HCT116 (cell line): ENCODE measurements at regions of chr11 and their contacts with region 1.

Region 1: DNA sequence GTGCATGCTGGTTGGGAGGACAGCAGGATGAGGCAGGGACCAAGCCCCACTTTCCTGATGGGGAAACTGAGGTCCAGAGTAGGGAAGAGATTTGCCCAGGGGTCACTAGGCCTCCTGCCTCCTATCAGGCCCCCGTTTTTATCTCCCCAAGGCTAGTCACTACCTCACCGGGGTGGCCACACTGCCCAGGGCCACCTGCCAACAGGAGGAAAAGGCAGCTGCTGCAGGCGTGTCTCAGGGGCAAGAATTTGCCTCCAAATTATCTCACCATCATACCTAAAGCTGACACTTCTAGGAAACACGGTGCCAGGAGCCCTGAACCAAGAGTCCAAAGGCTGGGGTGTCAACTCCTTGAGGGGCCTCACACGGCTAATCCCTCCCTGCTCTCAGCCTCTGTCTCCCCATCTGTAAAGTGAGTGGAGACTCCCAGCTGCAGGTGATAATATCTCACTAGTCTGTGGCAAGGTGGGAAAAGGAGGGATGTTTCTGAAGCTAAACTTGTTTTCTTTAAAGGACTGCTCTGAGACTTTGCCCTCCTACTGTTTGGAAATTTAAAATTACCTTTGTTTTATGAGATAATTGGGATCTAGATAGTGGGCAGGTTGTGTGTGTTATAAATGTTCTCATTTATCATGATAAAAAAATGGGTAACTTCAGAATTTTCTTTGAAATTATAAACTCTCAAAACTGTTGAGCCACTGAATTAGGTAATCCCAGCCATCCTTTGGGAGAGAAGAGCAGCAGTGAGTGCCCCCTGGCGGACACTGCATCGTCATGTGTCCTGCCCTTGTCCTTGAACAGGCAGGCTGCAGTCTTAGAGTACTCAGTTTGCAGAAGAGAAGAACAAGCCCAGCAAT is 60.0 kb downstream of the MYO7A start:
- DNase-seq: peak; percentile 54
- ATAC-seq: peak; percentile 54
- H3K4me3 ChIP-seq: no peak overlapping the region
- H3K27ac ChIP-seq: no peak overlapping the region
- H3K4me1 ChIP-seq: peaks cover 0 to 14% of the 10 kb centered on the region in 2 experiments; a peak in 3 of 4 replicates
- H3K27me3 ChIP-seq: no peaks in the 10 kb centered on the region
- CTCF ChIP-seq: peak; percentile 95 to 98 (median 96)
- POLR2A ChIP-seq: no peak
- RAD21 ChIP-seq: peak; percentile 88

Region 2: GRCh38 chr11:76152086-76152681 is 1035.8 kb before region 1 on chr11:
- CTCF ChIA-PET with region 1: no interaction called
- POLR2A ChIA-PET with region 1: no interaction called
- RAD21 ChIA-PET with region 1: no interaction called
- intact Hi-C with region 1: no loop called
- DNase-seq: peak; percentile 57
- ATAC-seq: peak; percentile 96
- H3K4me3 ChIP-seq: no peak overlapping the region
- H3K27ac ChIP-seq: no peak overlapping the region
- H3K4me1 ChIP-seq: peaks cover 0 to 8% of the 10 kb centered on the region in 2 experiments; a peak in 2 of 4 replicates
- H3K27me3 ChIP-seq: no peaks in the 10 kb centered on the region
- CTCF ChIP-seq: peak; percentile 88 to 94 (median 93)
- POLR2A ChIP-seq: no peak
- RAD21 ChIP-seq: peak; percentile 98

Region 3: DNA sequence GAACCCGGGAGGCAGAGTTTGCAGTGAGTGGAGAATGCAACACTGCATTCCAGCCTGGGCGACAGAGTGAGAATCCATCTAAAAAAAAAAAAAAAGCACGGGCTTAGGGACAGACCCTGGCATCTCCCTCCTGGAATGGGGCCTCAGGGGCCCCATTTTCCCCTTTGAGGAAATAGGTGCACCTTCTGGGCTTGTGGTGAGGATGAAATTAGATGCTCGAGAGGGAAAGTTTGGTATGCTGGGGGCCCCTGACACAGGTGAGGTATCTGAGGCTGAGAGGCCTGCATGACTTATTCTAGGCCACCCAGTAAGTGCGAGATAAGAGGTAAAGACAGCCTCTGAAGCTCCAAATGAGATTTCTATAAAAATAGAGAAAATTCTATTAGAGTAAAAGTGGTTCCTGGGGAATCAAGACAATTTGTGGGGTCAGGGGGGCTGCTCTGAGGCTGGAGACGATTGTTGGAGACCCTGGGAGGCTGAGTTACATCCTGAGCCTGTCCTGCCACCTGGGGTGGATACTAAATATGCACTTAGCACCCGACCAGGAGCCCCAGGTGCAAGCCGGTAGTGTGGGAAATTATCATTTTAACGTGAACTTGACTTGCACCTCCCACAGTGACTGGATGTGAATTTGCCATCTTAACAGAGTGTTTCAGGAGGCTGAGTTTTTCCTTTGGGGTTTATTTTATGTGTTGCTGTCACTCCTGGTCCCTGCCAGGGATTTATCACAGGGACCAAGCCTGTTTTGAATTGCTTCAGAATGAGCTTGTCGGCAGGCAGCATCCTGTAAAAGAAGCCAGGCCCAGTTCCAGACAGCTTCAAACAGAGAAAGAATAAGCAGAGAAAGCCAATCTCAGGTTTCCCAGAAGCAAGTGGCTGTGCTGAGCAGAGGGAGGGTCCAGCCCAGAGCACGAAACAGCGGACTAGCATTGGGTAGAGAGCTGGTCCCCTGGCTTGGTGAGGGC is 453.3 kb before region 1 on chr11:
- CTCF ChIA-PET with region 1: no interaction called
- POLR2A ChIA-PET with region 1: no interaction called
- RAD21 ChIA-PET with region 1: no interaction called
- intact Hi-C with region 1: loop called (anchors 5 kb)
- DNase-seq: no peak
- ATAC-seq: no peak
- H3K4me3 ChIP-seq: no peak overlapping the region
- H3K27ac ChIP-seq: no peak overlapping the region
- H3K4me1 ChIP-seq: no peaks in the 10 kb centered on the region
- H3K27me3 ChIP-seq: no peaks in the 10 kb centered on the region; the same call in 1 of the 2 replicates
- CTCF ChIP-seq: no peak
- POLR2A ChIP-seq: no peak
- RAD21 ChIP-seq: no peak

Region 4: DNA sequence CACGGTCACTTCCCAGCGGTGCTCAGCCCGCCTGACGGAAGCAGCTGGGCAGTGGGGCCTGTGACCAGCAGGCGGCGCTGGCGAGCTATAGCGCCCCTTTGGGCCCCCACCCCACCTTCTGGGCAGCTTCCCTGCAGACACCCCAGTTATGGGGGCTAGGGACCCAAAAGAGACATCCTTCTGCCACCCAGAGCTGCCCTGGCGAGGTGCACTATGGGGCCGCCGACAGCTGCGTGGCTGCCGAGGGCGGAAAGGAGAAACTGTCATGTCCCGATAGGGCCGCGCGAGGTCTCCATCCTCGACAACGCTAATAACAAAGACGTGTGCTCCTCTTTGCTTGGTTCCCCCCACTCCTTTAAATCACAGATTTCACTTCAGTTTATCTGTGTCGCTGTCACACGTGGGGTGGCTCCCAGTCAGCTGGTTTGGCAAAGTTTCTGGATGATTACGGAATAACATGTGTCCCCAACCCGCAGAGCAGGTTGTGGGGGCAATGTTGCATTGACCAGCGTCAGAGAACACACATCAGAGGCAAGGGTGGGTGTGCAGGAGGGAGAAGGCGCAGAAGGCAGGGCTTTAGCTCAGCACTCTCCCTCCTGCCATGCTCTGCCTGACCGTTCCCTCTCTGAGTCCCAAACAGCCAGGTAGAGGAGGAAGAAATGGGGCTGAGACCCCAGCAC is 60.6 kb before region 1 on chr11:
- CTCF ChIA-PET with region 1: interaction called, 26 read pairs
- POLR2A ChIA-PET with region 1: no interaction called
- RAD21 ChIA-PET with region 1: no interaction called
- intact Hi-C with region 1: loop called (anchors 1 kb)
- DNase-seq: no peak
- ATAC-seq: peak; percentile 89
- H3K4me3 ChIP-seq: peak overlapping the region; percentile 43 to 60
- H3K27ac ChIP-seq: no peak overlapping the region; the same call in 1 of the 2 replicates
- H3K4me1 ChIP-seq: peaks cover 3 to 15% of the 10 kb centered on the region in 2 experiments; a peak in 3 of 4 replicates
- H3K27me3 ChIP-seq: no peaks in the 10 kb centered on the region
- CTCF ChIP-seq: peak; percentile 99
- POLR2A ChIP-seq: no peak
- RAD21 ChIP-seq: peak; percentile 84

Region 5: GRCh38 chr11:77395460-77396173 is 207.6 kb after region 1 on chr11:
- CTCF ChIA-PET with region 1: no interaction called
- POLR2A ChIA-PET with region 1: no interaction called
- RAD21 ChIA-PET with region 1: no interaction called
- intact Hi-C with region 1: no loop called
- DNase-seq: no peak
- ATAC-seq: no peak
- H3K4me3 ChIP-seq: no peak overlapping the region
- H3K27ac ChIP-seq: no peak overlapping the region
- H3K4me1 ChIP-seq: no peaks in the 10 kb centered on the region
- H3K27me3 ChIP-seq: no peaks in the 10 kb centered on the region
- CTCF ChIP-seq: no peak
- POLR2A ChIP-seq: no peak
- RAD21 ChIP-seq: no peak

Region 6: GRCh38 chr11:77473801-77474683 is 286.0 kb after region 1 on chr11 and contains the start of gene PAK1:
- CTCF ChIA-PET with region 1: no interaction called
- POLR2A ChIA-PET with region 1: no interaction called
- RAD21 ChIA-PET with region 1: no interaction called
- intact Hi-C with region 1: loop called (anchors 2 kb)
- DNase-seq: peak; percentile 86
- ATAC-seq: peak; percentile 82
- H3K4me3 ChIP-seq: peak within 1 kb of the TSS; percentile 53 to 67
- H3K27ac ChIP-seq: peak within 1 kb of the TSS; percentile 52; the same call in 1 of the 2 replicates
- H3K4me1 ChIP-seq: peaks cover 18 to 29% of the 10 kb centered on the region in 2 experiments
- H3K27me3 ChIP-seq: no peaks in the 10 kb centered on the region
- CTCF ChIP-seq: 0 out of 6 replicates have a peak, but pooled peaks of 1 of the 3 experiments have one; percentile 16
- POLR2A ChIP-seq: no peak
- RAD21 ChIP-seq: no peak
- total RNA-seq, gene PAK1: 56.1 TPM

Region 7: GRCh38 chr11:77547863-77548551 is 360.0 kb after region 1 on chr11:
- CTCF ChIA-PET with region 1: interaction called, 5 read pairs
- POLR2A ChIA-PET with region 1: no interaction called
- RAD21 ChIA-PET with region 1: no interaction called
- intact Hi-C with region 1: loop called (anchors 1 kb)
- DNase-seq: peak; percentile 37
- ATAC-seq: peak; percentile 67
- H3K4me3 ChIP-seq: no peak overlapping the region
- H3K27ac ChIP-seq: no peak overlapping the region
- H3K4me1 ChIP-seq: no peaks in the 10 kb centered on the region
- H3K27me3 ChIP-seq: no peaks in the 10 kb centered on the region
- CTCF ChIP-seq: peak; percentile 49 to 93 (median 64)
- POLR2A ChIP-seq: no peak
- RAD21 ChIP-seq: peak; percentile 91

Region 8: DNA sequence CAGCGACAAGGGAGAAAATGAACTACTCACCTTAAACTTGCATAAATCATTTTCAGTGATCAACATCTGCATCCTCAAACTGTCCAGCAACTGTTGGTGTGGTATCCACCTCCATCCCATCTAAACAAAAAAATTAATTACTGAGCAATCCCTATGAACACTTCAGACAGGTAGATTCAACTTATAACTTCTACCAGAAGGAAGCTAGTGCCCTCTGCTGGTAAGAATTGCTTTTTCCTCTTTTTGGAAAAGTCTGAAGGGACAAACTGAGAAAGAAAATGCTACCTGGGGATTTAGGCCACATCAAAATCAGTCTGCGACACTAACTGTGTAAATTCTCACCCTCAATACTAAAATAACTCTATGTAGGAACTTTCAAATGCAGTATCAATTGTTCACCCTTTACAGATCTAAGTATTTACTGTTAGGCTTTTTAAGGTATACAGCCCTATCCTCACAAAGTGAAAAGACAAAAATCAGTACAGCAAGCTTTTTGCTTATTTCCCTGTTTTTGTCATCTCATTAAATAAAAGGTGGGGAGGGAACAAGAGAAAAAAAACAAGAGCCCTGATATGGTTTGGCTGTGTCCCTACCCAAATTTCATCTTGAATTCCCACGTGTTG is 431.7 kb after region 1 on chr11:
- CTCF ChIA-PET with region 1: interaction called, 3 read pairs
- POLR2A ChIA-PET with region 1: no interaction called
- RAD21 ChIA-PET with region 1: no interaction called
- intact Hi-C with region 1: loop called (anchors 1 kb)
- DNase-seq: peak; percentile 44
- ATAC-seq: peak; percentile 65
- H3K4me3 ChIP-seq: no peak overlapping the region
- H3K27ac ChIP-seq: no peak overlapping the region
- H3K4me1 ChIP-seq: no peaks in the 10 kb centered on the region
- H3K27me3 ChIP-seq: no peaks in the 10 kb centered on the region
- CTCF ChIP-seq: peak; percentile 63 to 80 (median 78)
- POLR2A ChIP-seq: no peak
- RAD21 ChIP-seq: peak; percentile 81